MCF 10A (cell line): ENCODE measurements at regions of chrX and their contacts with region 1.

Region 1: DNA sequence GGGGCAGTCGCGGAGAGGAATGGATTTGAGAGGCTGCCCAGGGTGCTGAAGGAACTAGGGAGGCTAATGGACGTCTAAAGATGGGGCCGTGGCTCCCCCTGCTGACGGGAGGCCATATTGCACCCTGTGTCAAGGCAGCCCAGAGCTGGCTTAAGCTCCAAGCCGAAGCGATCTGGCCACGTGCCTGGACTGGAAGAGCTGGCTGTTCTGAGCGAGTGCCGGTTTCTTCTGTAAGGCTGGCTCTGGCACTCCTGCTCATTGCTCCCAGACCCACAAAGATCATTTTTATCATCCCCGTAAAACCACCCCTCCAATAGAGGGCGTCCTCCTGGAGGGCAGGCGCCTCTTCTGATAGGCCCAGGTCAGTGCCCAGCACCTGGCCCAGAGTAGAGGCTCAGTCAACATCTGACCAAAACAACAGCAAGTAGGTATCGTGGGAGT is 5.6 kb downstream of the PNCK start:
- DNase-seq: peak; percentile 64
- H3K4me3 Mint-ChIP-seq: peak overlapping the region; percentile 68
- H3K27ac Mint-ChIP-seq: no peak overlapping the region
- H3K4me1 Mint-ChIP-seq: no peaks in the 10 kb centered on the region
- H3K27me3 Mint-ChIP-seq: no peaks in the 10 kb centered on the region
- CTCF ChIP-seq: peak; percentile 59

Region 2: DNA sequence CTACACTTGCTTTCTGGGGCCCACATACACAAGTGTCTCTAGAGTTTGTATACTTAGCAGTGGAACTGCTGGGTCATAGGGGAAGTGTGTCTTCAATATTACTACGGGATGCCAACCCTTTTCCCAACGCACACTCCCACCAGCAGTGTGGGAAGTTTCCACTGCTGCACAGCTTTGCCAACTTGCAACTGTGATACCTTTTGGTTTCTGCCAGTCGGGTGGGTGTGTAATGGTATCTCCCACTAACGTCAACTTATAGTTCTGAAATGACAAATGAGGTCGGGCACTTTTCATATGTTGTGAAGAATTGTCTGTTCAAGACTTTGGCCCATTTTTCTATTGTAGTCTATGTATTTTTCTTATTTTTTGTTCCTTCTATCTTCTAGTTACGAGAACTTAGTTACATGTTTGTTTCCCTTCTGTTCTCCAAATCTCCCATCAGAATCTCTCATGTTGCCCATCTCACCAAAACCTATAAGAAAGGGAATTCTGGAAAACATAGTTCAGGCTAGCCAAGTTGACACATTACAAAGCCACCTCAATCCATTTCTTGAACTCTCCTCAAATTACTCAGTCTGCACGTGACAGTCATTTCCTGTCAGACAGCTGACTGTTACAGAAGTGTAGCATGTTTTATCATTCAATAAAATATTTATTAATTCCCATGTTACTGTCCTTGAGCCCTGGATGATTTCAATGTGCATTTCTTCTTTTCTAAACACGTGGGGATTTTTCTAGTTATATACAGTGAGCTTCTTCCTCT is 297.5 kb before region 1 on chrX:
- CTCF ChIA-PET with region 1: no interaction called
- POLR2A ChIA-PET with region 1: no interaction called
- intact Hi-C with region 1: no loop called
- DNase-seq: no peak
- H3K4me3 Mint-ChIP-seq: no peak overlapping the region
- H3K27ac Mint-ChIP-seq: no peak overlapping the region
- H3K4me1 Mint-ChIP-seq: peaks cover 6% of the 10 kb centered on the region
- H3K27me3 Mint-ChIP-seq: peaks cover 33% of the 10 kb centered on the region
- CTCF ChIP-seq: no peak

Region 3: DNA sequence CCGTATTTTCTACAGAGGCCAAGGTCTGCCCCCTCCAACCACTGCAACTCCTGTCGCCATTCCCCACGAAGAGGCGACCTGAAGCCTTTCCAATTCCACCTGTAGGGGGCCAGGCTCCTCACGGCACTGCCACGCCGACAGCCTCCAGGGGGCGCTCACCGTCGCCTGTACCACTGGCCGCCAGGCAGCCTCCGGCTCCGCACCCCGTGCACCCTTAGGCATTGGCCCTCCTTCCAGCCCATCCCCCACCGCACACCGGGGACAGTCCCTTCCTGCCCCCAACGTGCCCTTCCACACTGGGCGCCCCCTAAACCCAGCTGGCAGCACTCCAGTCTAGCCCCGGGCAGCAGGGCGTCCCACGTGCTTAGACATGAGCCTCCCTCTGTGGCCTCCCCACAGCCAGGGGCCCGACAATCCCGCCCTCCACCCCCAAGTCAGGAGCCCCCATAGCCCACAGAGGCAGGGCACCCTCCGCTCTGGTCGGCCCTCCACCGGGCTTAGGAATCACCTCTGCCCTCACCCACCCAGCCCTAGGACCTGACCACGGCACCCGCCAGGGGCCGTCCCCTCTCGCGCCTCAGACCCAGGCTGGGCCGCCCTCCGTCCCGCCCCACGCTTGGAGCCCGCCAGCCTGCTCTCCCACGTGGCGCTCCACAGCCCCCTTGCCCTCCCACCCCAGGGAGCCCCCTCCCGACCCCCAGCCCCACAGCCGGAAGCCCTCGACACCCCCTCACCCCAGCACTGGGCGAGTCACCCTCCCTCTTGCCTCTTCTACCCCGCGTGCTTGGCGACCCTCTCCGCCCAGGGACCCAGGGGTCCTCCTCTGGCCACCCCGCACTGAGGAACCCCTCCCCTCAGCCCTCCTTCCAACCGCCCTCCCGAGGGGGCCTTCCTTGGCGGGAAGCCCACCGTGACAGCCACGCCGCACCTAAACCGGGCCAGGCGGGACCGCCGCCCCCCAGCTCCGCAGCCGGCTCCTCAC is 267.5 kb before region 1 on chrX:
- CTCF ChIA-PET with region 1: no interaction called
- POLR2A ChIA-PET with region 1: no interaction called
- intact Hi-C with region 1: no loop called
- DNase-seq: peak; percentile 33
- H3K4me3 Mint-ChIP-seq: no peak overlapping the region
- H3K27ac Mint-ChIP-seq: no peak overlapping the region
- H3K4me1 Mint-ChIP-seq: no peaks in the 10 kb centered on the region
- H3K27me3 Mint-ChIP-seq: peaks cover 29% of the 10 kb centered on the region
- CTCF ChIP-seq: peak; percentile 31

Region 4: GRCh38 chrX:153547195-153547594 is 120.8 kb before region 1 on chrX:
- CTCF ChIA-PET with region 1: interaction called, 10 read pairs
- POLR2A ChIA-PET with region 1: no interaction called
- intact Hi-C with region 1: no loop called
- DNase-seq: no peak
- H3K4me3 Mint-ChIP-seq: no peak overlapping the region
- H3K27ac Mint-ChIP-seq: no peak overlapping the region
- H3K4me1 Mint-ChIP-seq: no peaks in the 10 kb centered on the region
- H3K27me3 Mint-ChIP-seq: no peaks in the 10 kb centered on the region
- CTCF ChIP-seq: no peak

Region 5: GRCh38 chrX:153560000-153560399 is 108.0 kb before region 1 on chrX:
- CTCF ChIA-PET with region 1: interaction called, 26 read pairs
- POLR2A ChIA-PET with region 1: no interaction called
- intact Hi-C with region 1: loop called (anchors 5 kb)
- DNase-seq: no peak
- H3K4me3 Mint-ChIP-seq: no peak overlapping the region
- H3K27ac Mint-ChIP-seq: no peak overlapping the region
- H3K4me1 Mint-ChIP-seq: no peaks in the 10 kb centered on the region
- H3K27me3 Mint-ChIP-seq: no peaks in the 10 kb centered on the region
- CTCF ChIP-seq: no peak

Region 6: GRCh38 chrX:153609917-153610428 is 58.0 kb before region 1 on chrX:
- CTCF ChIA-PET with region 1: interaction called, 45 read pairs
- POLR2A ChIA-PET with region 1: interaction called, 3 read pairs
- intact Hi-C with region 1: no loop called
- DNase-seq: peak; percentile 61
- H3K4me3 Mint-ChIP-seq: peak overlapping the region; percentile 10
- H3K27ac Mint-ChIP-seq: no peak overlapping the region
- H3K4me1 Mint-ChIP-seq: no peaks in the 10 kb centered on the region
- H3K27me3 Mint-ChIP-seq: peaks cover 19% of the 10 kb centered on the region
- CTCF ChIP-seq: peak; percentile 67

Region 7: GRCh38 chrX:153657161-153657560 is 10.8 kb before region 1 on chrX:
- CTCF ChIA-PET with region 1: interaction called, 23 read pairs
- POLR2A ChIA-PET with region 1: interaction called, 3 read pairs
- intact Hi-C with region 1: no loop called
- DNase-seq: no peak
- H3K4me3 Mint-ChIP-seq: no peak overlapping the region
- H3K27ac Mint-ChIP-seq: no peak overlapping the region
- H3K4me1 Mint-ChIP-seq: no peaks in the 10 kb centered on the region
- H3K27me3 Mint-ChIP-seq: peaks cover 11% of the 10 kb centered on the region
- CTCF ChIP-seq: no peak